MCF 10A (cell line): ENCODE measurements at regions of chr10 and their contacts with region 1.

Region 1: GRCh38 chr10:112461029-112461887 is 14.2 kb downstream of the VTI1A start:
- DNase-seq: peak; percentile 63
- H3K4me3 Mint-ChIP-seq: no peak overlapping the region
- H3K27ac Mint-ChIP-seq: peak overlapping the region; percentile 50
- H3K4me1 Mint-ChIP-seq: peaks cover 8% of the 10 kb centered on the region
- H3K27me3 Mint-ChIP-seq: no peaks in the 10 kb centered on the region
- CTCF ChIP-seq: no peak

Region 2: DNA sequence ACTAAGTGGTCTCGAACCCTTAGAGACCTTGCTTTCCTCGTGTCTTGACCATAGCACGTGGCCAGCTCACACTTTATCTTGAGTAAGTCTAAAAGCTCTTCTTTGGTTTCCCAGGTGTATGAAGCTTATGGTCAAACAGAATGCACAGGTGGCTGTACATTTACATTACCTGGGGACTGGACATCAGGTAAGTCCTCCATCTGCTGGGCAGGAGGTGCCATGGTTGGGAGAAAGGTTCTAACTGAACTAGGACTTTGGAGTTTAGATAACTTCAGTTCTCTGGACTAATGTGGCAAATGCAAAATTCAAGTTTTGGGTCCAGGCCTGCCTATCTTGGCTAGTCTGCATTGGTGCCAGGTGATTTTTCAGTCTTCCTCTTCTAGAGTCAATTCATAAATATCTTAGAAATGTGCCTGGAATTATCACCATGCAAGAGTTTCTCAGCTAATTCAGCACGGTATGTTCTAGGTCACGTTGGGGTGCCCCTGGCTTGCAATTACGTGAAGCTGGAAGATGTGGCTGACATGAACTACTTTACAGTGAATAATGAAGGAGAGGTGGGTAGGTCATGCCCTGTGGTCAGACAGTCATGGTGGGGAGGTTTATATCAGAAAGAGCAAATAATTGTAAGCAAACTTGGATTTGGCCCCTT is 39.7 kb before region 1 on chr10:
- CTCF ChIA-PET with region 1: no interaction called
- POLR2A ChIA-PET with region 1: no interaction called
- intact Hi-C with region 1: no loop called
- DNase-seq: no peak
- H3K4me3 Mint-ChIP-seq: no peak overlapping the region
- H3K27ac Mint-ChIP-seq: no peak overlapping the region
- H3K4me1 Mint-ChIP-seq: no peaks in the 10 kb centered on the region
- H3K27me3 Mint-ChIP-seq: no peaks in the 10 kb centered on the region
- CTCF ChIP-seq: no peak

Region 3: GRCh38 chr10:112446855-112447711 is 14.2 kb before region 1 on chr10 and contains the starts of genes VTI1A and ZDHHC6:
- CTCF ChIA-PET with region 1: interaction called, 3 read pairs
- POLR2A ChIA-PET with region 1: interaction called, 17 read pairs
- intact Hi-C with region 1: no loop called
- DNase-seq: peak; percentile 85
- H3K4me3 Mint-ChIP-seq: peak within 1 kb of the TSS; percentile 95
- H3K27ac Mint-ChIP-seq: peak within 1 kb of the TSS; percentile 88
- H3K4me1 Mint-ChIP-seq: peaks cover 16% of the 10 kb centered on the region
- H3K27me3 Mint-ChIP-seq: no peaks in the 10 kb centered on the region
- CTCF ChIP-seq: no peak
- total RNA-seq, gene VTI1A: 44.4 and 58.1 TPM in 2 replicates
- total RNA-seq, gene ZDHHC6: 25.9 and 26.3 TPM in 2 replicates

Region 4: GRCh38 chr10:112605063-112605462 is 143.8 kb after region 1 on chr10:
- CTCF ChIA-PET with region 1: no interaction called
- POLR2A ChIA-PET with region 1: no interaction called
- intact Hi-C with region 1: no loop called
- DNase-seq: no peak
- H3K4me3 Mint-ChIP-seq: no peak overlapping the region
- H3K27ac Mint-ChIP-seq: no peak overlapping the region
- H3K4me1 Mint-ChIP-seq: no peaks in the 10 kb centered on the region
- H3K27me3 Mint-ChIP-seq: no peaks in the 10 kb centered on the region
- CTCF ChIP-seq: no peak